Sciatic nerve (tissue), 2 donors: ENCODE measurements at regions of chr1 and their contacts with region 1.

Region 1: GRCh38 chr1:165914136-165914798 is 86.9 kb downstream of the UCK2 start:
- DNase-seq: peak; percentile 73
- ATAC-seq: peak; percentile 79

Region 2: GRCh38 chr1:165392634-165393571 is 521.4 kb before region 1 on chr1:
- intact Hi-C with region 1: loop called (anchors 10 kb)
- DNase-seq: peak; percentile 95
- ATAC-seq: peak; percentile 99

Region 3: GRCh38 chr1:165600793-165601192 is 313.5 kb before region 1 on chr1:
- intact Hi-C with region 1: loop called (anchors 10 kb)
- DNase-seq: no peak
- ATAC-seq: no peak

Region 4: DNA sequence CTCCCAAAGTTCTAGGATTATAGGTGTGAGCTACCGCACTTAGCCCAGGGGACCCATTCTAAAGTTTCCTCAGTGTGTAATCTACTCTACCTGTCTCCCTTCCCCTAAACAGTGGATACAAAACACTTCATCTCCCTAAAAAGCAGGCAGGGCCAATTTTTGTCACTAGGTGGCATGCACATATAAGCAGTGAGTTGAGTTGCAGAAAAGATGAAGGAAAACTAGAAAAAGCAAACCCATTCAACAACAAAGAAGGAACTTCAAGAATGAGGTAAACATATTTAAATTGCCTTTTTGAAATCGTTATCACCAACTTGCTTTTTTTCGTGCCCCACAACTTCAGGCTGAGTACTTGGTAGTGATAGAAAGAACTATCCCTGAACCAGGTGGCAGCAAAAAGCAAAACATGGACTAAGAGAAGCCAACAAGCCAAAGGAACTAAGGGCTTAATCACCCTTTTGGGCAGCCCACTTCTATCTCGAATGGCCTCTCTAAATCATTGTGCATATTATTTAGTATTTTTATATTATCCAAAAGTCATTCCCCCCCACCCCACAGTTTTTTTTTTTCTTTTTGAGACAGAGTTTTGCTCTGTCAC is 196.2 kb before region 1 on chr1:
- intact Hi-C with region 1: loop called (anchors 5 kb)
- DNase-seq: no peak
- ATAC-seq: no peak